ENCODE measurements at regions of chr1 and their contacts with region 1.

Region 1: DNA sequence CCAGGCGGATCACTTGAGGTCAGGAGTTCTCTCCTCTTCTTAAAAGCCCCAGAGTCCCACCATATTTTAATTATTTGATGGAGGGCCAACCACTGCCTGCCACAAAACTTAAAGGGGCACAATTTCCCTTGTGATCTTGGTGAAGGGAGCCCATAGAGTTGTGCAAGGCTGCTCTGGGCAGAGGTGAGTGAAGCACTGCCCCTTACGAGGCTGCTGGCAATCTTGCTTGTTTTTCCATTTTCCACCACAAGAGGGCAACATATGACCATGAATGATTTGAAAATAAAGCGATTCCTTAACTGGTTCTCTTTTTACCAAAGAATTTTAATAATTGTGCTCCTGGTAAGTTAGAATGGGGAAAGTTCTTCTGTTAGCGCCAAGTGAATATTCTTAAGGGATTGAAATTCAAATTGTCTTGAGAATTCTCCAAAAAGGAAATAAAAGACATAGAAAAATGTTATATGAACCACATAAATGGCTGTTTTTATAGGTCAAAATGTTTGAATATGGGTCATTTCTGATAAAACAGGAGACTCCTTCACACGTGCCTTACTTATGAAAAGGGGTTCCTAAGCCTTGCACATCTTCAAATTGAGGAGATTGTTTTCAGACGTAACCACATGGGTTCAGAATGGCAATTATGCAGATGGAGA is 22.7 kb downstream of the PGM1 start:
- DNase-seq: no peak
- ATAC-seq: peak; percentile 66
- H3K4me3 Mint-ChIP-seq: no peak overlapping the region
- H3K27ac Mint-ChIP-seq: no peak overlapping the region
- H3K4me1 Mint-ChIP-seq: no peaks in the 10 kb centered on the region
- H3K27me3 Mint-ChIP-seq: no peaks in the 10 kb centered on the region
- CTCF ChIP-seq: no peak

Region 2: GRCh38 chr1:63575340-63575826 is 40.5 kb before region 1 on chr1:
- CTCF ChIA-PET with region 1: no interaction called
- POLR2A ChIA-PET with region 1: no interaction called
- intact Hi-C with region 1: loop called (anchors 1 kb)
- DNase-seq: no peak
- ATAC-seq: no peak
- H3K4me3 Mint-ChIP-seq: no peak overlapping the region
- H3K27ac Mint-ChIP-seq: no peak overlapping the region
- H3K4me1 Mint-ChIP-seq: no peaks in the 10 kb centered on the region
- H3K27me3 Mint-ChIP-seq: no peaks in the 10 kb centered on the region
- CTCF ChIP-seq: peak; percentile 67

Region 3: DNA sequence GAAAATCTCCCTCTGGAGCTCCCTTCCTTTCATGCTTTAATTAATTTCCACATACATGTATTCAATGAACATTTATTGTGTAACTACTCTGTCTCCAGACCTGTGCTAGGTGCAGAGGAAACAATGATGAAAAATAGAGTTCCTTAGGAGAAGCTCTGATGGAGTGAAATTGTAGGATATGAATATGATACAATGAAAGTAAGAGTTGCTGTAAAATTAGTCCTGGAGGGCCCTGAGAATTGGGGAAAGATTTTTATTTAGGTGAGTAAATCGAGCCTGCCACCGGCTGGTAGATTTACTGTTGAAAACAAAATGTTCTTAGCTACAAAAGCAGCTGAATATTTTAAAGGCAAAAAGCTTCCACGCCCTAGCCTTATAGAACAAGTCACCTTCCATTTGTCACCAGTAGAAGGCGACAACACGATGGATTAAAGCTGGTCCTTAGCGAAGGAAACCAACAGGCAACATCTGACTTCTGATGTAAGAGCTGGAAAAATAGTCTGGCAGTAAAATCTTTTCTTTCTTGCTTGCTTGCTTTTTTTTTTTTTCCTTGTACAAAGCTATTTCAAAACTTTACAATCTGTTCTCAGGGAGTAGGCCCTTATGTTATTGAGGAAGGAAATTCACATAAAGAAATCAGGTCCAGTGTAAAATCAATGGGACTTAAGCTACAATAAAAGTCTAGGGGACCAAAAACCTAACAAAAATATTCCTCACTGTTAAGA is 76.0 kb after region 1 on chr1:
- CTCF ChIA-PET with region 1: interaction called, 11 read pairs
- POLR2A ChIA-PET with region 1: no interaction called
- intact Hi-C with region 1: no loop called
- DNase-seq: no peak
- ATAC-seq: peak; percentile 57
- H3K4me3 Mint-ChIP-seq: no peak overlapping the region
- H3K27ac Mint-ChIP-seq: no peak overlapping the region
- H3K4me1 Mint-ChIP-seq: no peaks in the 10 kb centered on the region
- H3K27me3 Mint-ChIP-seq: peaks cover 8% of the 10 kb centered on the region
- CTCF ChIP-seq: no peak

Region 4: DNA sequence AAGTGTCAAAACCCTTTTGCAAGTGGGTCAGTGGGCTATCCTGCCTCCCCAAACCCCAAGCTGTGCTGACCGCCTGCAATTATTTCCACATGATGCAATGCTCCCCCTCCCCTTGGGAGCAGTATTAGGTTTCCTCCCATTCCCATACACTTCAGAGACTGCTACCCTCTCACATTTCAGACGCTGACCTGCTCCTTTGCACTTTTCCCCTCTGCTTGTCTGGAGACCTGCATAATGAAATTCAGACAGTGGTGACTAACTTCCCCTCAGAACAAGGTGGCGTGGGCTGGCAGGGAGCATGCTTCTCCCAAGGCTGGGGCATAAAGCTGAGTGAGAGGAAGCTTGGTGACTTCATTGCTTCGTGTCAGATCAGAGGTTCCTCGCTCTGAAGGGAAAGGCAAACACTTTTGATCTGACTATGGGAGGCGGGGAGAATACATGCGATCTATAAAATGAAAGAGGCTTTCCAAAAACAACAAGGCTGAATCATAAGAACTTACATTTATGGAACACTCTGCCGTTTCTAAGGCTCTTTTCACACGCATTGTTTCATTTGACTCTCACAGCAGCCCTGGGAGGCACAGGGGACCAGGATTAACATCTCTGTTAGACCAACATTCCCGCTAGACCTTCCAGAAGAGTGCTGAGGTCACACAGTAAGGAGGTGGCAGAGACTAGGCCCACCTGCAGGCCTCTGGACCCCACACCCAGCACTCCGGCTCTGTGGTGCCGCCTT is 130.4 kb after region 1 on chr1:
- CTCF ChIA-PET with region 1: no interaction called
- POLR2A ChIA-PET with region 1: no interaction called
- intact Hi-C with region 1: no loop called
- DNase-seq: no peak
- ATAC-seq: no peak
- H3K4me3 Mint-ChIP-seq: no peak overlapping the region
- H3K27ac Mint-ChIP-seq: no peak overlapping the region
- H3K4me1 Mint-ChIP-seq: peaks cover 4% of the 10 kb centered on the region
- H3K27me3 Mint-ChIP-seq: peaks cover 18% of the 10 kb centered on the region
- CTCF ChIP-seq: no peak

Region 5: DNA sequence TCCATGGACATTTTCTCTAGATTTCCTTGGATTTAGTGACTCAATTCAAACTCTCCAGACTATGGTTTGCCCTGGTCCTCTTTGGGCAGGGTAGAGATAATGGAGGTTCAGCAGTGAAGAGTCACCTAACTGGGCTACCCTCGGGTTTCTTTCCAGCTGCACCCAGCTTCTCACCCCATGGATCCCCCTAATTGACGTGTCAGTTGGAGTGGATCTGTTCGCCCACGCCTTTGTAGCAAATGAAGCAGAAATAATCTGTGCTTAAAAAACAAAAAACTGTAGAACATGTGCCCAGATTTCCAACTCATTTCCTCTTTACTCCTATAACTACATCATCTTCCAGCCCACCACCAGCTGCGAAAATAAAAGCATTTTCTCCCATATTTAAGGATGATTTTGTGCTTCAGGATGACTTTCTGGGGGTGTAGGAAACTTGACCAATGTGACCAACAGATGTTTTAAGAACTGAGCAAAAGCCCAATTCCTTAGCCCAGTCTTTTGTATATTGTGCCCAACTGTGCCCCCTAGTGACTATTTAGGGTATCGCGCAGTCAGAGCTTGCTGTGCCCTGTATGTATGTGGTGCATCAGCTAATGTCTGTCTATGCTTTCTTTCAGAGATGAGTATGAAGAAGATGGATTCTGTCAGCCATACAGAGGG is 521.0 kb after region 1 on chr1:
- CTCF ChIA-PET with region 1: interaction called, 12 read pairs
- POLR2A ChIA-PET with region 1: no interaction called
- intact Hi-C with region 1: loop called (anchors 1 kb)
- DNase-seq: peak; percentile 39
- ATAC-seq: peak; percentile 73
- H3K4me3 Mint-ChIP-seq: no peak overlapping the region
- H3K27ac Mint-ChIP-seq: no peak overlapping the region
- H3K4me1 Mint-ChIP-seq: no peaks in the 10 kb centered on the region
- H3K27me3 Mint-ChIP-seq: peaks cover 5% of the 10 kb centered on the region
- CTCF ChIP-seq: peak; percentile 34

Region 6: GRCh38 chr1:64242895-64243756 is 627.2 kb after region 1 on chr1:
- CTCF ChIA-PET with region 1: interaction called, 44 read pairs
- POLR2A ChIA-PET with region 1: no interaction called
- intact Hi-C with region 1: loop called (anchors 1 kb)
- DNase-seq: no peak
- ATAC-seq: no peak
- H3K4me3 Mint-ChIP-seq: peak overlapping the region; percentile 50
- H3K27ac Mint-ChIP-seq: no peak overlapping the region
- H3K4me1 Mint-ChIP-seq: peaks cover 15% of the 10 kb centered on the region
- H3K27me3 Mint-ChIP-seq: peaks cover 20% of the 10 kb centered on the region
- CTCF ChIP-seq: no peak

Region 7: GRCh38 chr1:64675718-64676345 is 1059.9 kb after region 1 on chr1:
- CTCF ChIA-PET with region 1: no interaction called
- POLR2A ChIA-PET with region 1: no interaction called
- intact Hi-C with region 1: loop called (anchors 5 kb)
- DNase-seq: no peak
- ATAC-seq: no peak
- H3K4me3 Mint-ChIP-seq: no peak overlapping the region
- H3K27ac Mint-ChIP-seq: no peak overlapping the region
- H3K4me1 Mint-ChIP-seq: no peaks in the 10 kb centered on the region
- H3K27me3 Mint-ChIP-seq: peaks cover 5% of the 10 kb centered on the region
- CTCF ChIP-seq: peak; percentile 93

Region 8: DNA sequence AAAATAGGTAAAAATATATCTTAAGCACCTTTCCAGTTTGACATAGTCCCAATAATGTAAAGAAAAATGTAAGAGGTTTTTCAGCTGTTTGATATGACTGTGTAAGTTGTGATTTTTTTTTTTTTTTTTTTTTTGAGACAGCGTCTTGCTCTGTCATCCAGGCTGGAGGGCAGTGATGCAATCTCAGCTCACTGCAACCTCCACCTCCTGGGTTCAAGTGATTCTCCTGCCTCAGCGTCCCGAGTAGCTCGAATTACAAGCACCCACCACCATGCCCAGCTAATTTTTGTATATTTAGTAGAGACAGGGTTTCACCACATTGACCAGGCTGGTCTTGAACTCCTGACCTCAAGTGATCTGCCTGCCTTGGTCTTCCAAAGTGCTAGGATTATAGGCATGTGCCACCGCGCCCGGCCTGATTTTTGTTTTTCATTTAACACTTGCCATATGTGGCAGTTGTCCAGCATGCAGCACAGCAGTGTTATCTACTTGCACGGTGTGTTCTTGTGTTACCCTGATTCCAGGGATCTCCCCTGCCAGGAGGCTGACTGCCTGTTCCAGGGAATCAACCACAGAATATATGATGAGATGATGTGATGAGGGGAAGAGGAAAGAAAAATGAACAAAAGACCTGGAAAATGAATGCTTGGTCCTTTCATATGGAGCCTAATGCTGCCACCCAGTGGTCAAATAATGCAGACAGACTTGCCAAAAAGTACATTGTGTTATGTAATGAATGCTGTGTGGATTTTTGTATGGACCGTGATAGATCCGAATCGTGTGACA is 1208.0 kb after region 1 on chr1:
- CTCF ChIA-PET with region 1: no interaction called
- POLR2A ChIA-PET with region 1: no interaction called
- intact Hi-C with region 1: loop called (anchors 5 kb)
- DNase-seq: no peak
- ATAC-seq: peak; percentile 54
- H3K4me3 Mint-ChIP-seq: no peak overlapping the region
- H3K27ac Mint-ChIP-seq: no peak overlapping the region
- H3K4me1 Mint-ChIP-seq: peaks cover 22% of the 10 kb centered on the region
- H3K27me3 Mint-ChIP-seq: no peaks in the 10 kb centered on the region
- CTCF ChIP-seq: no peak